ENCODE measurements at regions of chr3 and their contacts with region 1.

Region 1: GRCh38 chr3:20160230-20160629 is 25.8 kb downstream of the SGO1 start:
- DNase-seq: peak in 2 of 14 experiments; percentile 8 to 38
- ATAC-seq: peak; percentile 48
- H3K4me3 ChIP-seq: no peak overlapping the region
- H3K4me3 Mint-ChIP-seq: no peak overlapping the region
- H3K27ac ChIP-seq: peak overlapping the region; percentile 4 to 22
- H3K27ac Mint-ChIP-seq: peak overlapping the region; percentile 30
- H3K4me1 ChIP-seq: peaks cover 8% of the 10 kb centered on the region
- H3K4me1 Mint-ChIP-seq: peaks cover 27% of the 10 kb centered on the region
- H3K27me3 ChIP-seq: no peaks in the 10 kb centered on the region
- H3K27me3 Mint-ChIP-seq: no peaks in the 10 kb centered on the region
- CTCF ChIP-seq: no peak

Region 2: DNA sequence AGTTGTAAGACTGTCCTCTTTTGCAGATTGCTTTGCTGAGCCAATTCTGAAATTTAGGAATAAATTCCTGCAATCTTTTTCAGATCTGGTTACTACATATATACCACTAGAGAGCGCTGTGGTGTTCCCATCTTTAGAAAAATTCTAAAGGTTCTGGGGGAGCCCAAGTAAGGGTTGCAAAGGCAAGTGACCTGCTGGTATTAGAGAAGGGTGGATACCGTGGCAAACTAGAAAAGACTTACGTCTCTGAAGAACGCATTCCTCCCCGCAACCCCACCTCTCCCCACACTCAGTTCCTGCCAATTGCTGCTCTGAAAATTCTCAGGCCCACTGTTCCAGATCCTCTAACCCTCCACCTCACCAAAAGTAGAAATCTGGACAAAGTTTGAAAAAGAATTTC is 274.8 kb before region 1 on chr3:
- CTCF ChIA-PET with region 1: no interaction called
- POLR2A ChIA-PET with region 1: no interaction called
- intact Hi-C with region 1: loop called in 1 of 2 experiments (anchors 10 kb)
- DNase-seq: peak in 3 of 14 experiments; percentile 38 to 50 (median 46)
- ATAC-seq: no peak
- H3K4me3 ChIP-seq: no peak overlapping the region
- H3K4me3 Mint-ChIP-seq: no peak overlapping the region
- H3K27ac ChIP-seq: no peak overlapping the region
- H3K27ac Mint-ChIP-seq: no peak overlapping the region
- H3K4me1 ChIP-seq: no peaks in the 10 kb centered on the region
- H3K4me1 Mint-ChIP-seq: no peaks in the 10 kb centered on the region
- H3K27me3 ChIP-seq: no peaks in the 10 kb centered on the region
- H3K27me3 Mint-ChIP-seq: no peaks in the 10 kb centered on the region
- CTCF ChIP-seq: peak; percentile 63

Region 3: DNA sequence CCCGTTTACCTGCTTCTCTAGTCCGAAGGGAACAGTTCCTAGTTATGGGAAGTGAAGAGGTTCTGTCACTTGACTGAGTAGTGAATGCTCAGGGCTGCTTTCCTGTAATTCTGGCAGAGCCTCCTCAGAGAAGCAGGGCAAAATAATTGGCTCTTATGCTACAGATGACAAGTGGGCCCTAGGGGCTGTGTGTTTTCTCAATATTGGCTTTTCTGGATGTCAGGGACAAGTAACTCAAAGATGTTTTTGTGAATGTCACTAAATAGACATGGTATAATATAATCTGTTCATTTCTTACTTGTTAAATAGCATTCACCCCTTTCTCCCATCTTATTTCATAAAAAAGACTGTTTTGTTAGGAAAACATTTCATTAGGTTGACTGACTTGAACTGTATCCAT is 14.4 kb before region 1 on chr3:
- CTCF ChIA-PET with region 1: no interaction called
- POLR2A ChIA-PET with region 1: no interaction called
- intact Hi-C with region 1: no loop called
- DNase-seq: no peak
- ATAC-seq: no peak
- H3K4me3 ChIP-seq: no peak overlapping the region
- H3K4me3 Mint-ChIP-seq: no peak overlapping the region
- H3K27ac ChIP-seq: no peak overlapping the region
- H3K27ac Mint-ChIP-seq: no peak overlapping the region
- H3K4me1 ChIP-seq: no peaks in the 10 kb centered on the region
- H3K4me1 Mint-ChIP-seq: no peaks in the 10 kb centered on the region
- H3K27me3 ChIP-seq: no peaks in the 10 kb centered on the region
- H3K27me3 Mint-ChIP-seq: no peaks in the 10 kb centered on the region
- CTCF ChIP-seq: no peak